Gastrocnemius medialis (tissue), 4 donors: ENCODE measurements at regions of chrX and their contacts with region 1.

Region 1: GRCh38 chrX:55717521-55718497 is at the start of gene RRAGB:
- DNase-seq: peak; percentile 90 to 96
- ATAC-seq: peak; percentile 96 to 97
- H3K4me3 ChIP-seq: peak within 1 kb of the TSS; percentile 66 to 77 (median 74)
- H3K27ac ChIP-seq: peak within 1 kb of the TSS; percentile 83 to 93 (median 90)
- H3K4me1 ChIP-seq: peaks cover 5 to 12% of the 10 kb centered on the region in 2 donors
- H3K27me3 ChIP-seq: no peaks in the 10 kb centered on the region
- CTCF ChIP-seq: peak; percentile 54 to 67 (median 56)
- POLR2A ChIP-seq: peak; percentile 36 to 49
- total RNA-seq, gene RRAGB: 2.8 to 20.9 (median 7.4) TPM

Region 2: DNA sequence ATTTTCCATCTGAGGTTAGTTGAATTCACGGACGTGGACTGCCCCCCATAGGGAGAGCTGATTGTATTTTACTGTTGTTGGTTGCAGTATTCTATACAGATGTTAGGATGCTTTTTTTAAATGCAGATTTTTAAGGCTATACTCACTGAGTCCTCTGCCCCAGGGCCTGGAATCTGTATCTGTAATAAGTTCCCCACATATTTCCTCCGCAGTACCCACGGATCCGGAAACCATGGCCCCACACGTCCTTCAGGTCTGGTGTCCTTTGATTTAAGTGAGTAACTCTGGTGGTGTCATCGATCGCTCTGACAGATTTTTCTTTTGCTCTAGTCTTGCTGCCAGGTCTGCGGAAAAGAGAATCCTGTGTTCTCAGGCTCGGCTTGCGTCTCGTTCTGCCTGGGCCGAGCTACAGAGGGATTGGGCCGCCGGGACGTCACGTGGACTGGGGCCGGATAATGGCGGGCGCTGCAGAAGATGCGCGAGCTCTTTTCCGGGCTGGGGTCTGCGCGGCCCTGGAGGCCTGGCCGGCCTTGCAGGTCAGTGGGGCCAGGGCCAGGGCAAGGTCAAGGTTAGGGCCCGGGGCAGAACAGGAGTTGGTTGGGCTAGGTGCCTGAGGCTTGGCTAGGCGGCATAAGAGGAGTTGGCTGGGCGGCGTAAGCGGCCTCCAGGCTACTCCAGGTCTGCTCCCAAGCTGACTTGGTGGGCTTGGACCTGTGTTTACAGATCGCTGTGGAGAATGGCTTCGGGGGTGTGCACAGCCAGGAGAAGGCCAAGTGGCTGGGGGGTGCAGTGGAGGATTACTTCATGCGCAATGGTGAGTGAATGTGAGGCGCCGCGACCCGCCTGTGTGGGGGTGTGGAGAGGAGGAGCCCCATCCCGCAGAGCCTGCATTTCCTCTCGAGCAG is 1277.6 kb before region 1 on chrX and contains the start of gene TSR2:
- in situ Hi-C with region 1: no loop called
- intact Hi-C with region 1: loop called (anchors 5 kb)
- DNase-seq: peak; percentile 63 to 76
- ATAC-seq: peak; percentile 96 to 97
- H3K4me3 ChIP-seq: peak within 1 kb of the TSS; percentile 74 to 95 (median 90)
- H3K27ac ChIP-seq: peak within 1 kb of the TSS; percentile 61 to 77 (median 63)
- H3K4me1 ChIP-seq: peaks cover 6 to 14% of the 10 kb centered on the region in 2 donors
- H3K27me3 ChIP-seq: no peaks in the 10 kb centered on the region
- CTCF ChIP-seq: no peak
- POLR2A ChIP-seq: peak in 1 of 2 donors; percentile 49
- total RNA-seq, gene TSR2: 10.1 to 24.2 (median 18.0) TPM

Region 3: GRCh38 chrX:55160685-55161552 is 556.9 kb before region 1 on chrX:
- in situ Hi-C with region 1: loop called in 2 of 4 experiments (anchors 25 kb)
- intact Hi-C with region 1: loop called (anchors 2 kb)
- DNase-seq: peak; percentile 81 to 87
- ATAC-seq: peak; percentile 96
- H3K4me3 ChIP-seq: peak overlapping the region; percentile 64 to 73 (median 68)
- H3K27ac ChIP-seq: peak overlapping the region; percentile 90 to 91 (median 91)
- H3K4me1 ChIP-seq: peaks cover 0 to 5% of the 10 kb centered on the region in 2 donors
- H3K27me3 ChIP-seq: no peaks in the 10 kb centered on the region
- CTCF ChIP-seq: peak; percentile 12 to 52 (median 41)
- POLR2A ChIP-seq: peak; percentile 76 to 83

Region 4: GRCh38 chrX:55488593-55489313 is 229.1 kb before region 1 on chrX:
- in situ Hi-C with region 1: loop called in 1 of 4 experiments (anchors 25 kb)
- intact Hi-C with region 1: no loop called
- DNase-seq: peak; percentile 13 to 42
- ATAC-seq: peak; percentile 75 to 79
- H3K4me3 ChIP-seq: peak overlapping the region; percentile 71 to 79 (median 76)
- H3K27ac ChIP-seq: peak overlapping the region; percentile 77 to 85 (median 84)
- H3K4me1 ChIP-seq: no peaks in the 10 kb centered on the region
- H3K27me3 ChIP-seq: no peaks in the 10 kb centered on the region
- CTCF ChIP-seq: no peak
- POLR2A ChIP-seq: peak; percentile 16 to 41

Region 5: DNA sequence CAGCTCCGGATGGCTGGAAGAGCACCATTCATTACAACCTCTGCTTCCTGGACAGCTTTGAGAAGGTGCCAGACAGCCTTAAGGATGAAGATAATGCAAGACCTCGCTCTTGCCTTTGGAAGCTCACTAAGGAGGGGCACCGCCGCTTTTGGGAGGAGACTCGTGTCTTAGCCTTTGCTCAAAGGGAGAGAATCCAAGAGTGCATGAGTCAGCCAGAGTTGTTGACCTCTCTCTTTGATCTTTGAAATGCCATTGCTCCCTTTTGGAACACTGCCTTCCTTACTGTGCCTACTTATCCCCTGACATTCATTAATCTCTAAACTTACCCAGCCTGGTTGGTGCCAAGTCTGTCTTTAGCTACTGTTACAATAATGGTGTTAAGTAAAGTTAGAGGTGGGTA is 93.4 kb before region 1 on chrX:
- in situ Hi-C with region 1: loop called in 1 of 4 experiments (anchors 25 kb)
- intact Hi-C with region 1: no loop called
- DNase-seq: no peak
- ATAC-seq: no peak
- H3K4me3 ChIP-seq: no peak overlapping the region
- H3K27ac ChIP-seq: no peak overlapping the region
- H3K4me1 ChIP-seq: no peaks in the 10 kb centered on the region
- H3K27me3 ChIP-seq: no peaks in the 10 kb centered on the region
- CTCF ChIP-seq: no peak
- POLR2A ChIP-seq: no peak

Region 6: DNA sequence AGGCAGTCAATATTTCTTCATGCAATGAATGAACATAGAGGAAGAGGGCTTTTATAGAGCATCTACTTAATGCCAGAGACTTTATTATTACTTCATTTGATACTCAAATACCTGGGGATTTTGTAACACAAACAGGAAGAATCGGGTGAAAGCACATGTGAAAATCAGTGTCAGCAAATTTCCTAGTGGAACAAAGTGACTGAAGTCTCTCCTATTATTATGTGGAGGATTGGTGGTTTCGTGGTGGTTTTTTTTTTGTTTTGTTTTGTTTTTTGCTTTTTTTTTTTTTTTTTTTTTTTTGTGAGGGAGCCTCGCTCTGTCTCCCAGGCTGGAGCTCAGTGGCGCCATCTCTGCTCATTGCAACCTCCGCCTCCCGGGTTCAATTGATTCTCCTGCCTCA is 206.8 kb after region 1 on chrX:
- in situ Hi-C with region 1: no loop called
- intact Hi-C with region 1: no loop called
- DNase-seq: no peak
- ATAC-seq: no peak
- H3K4me3 ChIP-seq: no peak overlapping the region
- H3K27ac ChIP-seq: no peak overlapping the region
- H3K4me1 ChIP-seq: no peaks in the 10 kb centered on the region
- H3K27me3 ChIP-seq: no peaks in the 10 kb centered on the region
- CTCF ChIP-seq: no peak
- POLR2A ChIP-seq: no peak